Panc1 (cell line): ENCODE measurements at regions of chr2 and their contacts with region 1.

Region 1: GRCh38 chr2:151063271-151063670 is 198.4 kb downstream of the RBM43 start:
- DNase-seq: no peak
- ATAC-seq: no peak
- H3K4me3 ChIP-seq: no peak overlapping the region
- H3K27ac ChIP-seq: no peak overlapping the region
- H3K4me1 ChIP-seq: no peaks in the 10 kb centered on the region
- H3K27me3 ChIP-seq: no peaks in the 10 kb centered on the region
- CTCF ChIP-seq: no peak

Region 2: DNA sequence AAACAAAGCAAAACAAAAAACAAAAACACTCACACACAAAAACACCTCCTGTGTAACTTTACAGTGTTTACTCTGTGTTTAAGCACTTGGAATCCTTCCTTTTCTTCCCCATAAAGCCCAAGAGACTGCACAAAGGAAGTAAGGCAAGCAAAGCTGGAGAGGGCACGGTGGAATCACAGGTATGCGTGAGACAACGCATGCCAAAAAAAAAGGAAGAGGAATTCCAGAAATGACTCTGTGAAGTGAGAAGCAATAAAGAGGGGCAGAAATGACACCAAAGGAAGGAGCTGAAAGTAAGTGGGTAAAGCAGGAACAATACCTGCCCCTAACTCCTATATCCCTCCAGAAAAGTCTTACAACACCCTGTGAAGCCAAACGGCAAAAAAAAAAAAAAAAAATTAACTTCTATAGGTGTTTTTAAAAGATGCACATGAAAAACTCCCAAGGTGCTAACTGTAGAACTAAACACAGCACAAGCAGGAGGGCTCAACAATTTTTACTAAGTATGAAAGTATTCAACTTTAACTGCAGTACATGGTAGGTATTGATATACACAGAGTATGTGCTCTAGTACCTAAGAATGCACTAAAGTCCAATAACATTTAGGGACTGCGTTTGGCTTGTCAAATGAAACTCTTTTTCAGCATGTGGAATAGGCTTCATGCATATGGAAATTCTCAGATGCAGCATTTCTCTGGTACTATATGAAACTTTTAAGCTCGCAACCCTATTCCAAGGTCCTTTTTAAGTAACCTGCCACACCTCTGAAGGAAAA is 584.9 kb before region 1 on chr2:
- CTCF ChIA-PET with region 1: no interaction called
- POLR2A ChIA-PET with region 1: interaction called, 11 read pairs
- in situ Hi-C with region 1: no loop called
- intact Hi-C with region 1: loop called (anchors 10 kb)
- DNase-seq: no peak
- ATAC-seq: peak; percentile 47; the same call in 1 of the 2 replicates
- H3K4me3 ChIP-seq: peak overlapping the region in 1 of 2 experiments; percentile 19; a peak in 1 of 4 replicates
- H3K27ac ChIP-seq: peak overlapping the region; percentile 77
- H3K4me1 ChIP-seq: peaks cover 87% of the 10 kb centered on the region
- H3K27me3 ChIP-seq: no peaks in the 10 kb centered on the region
- CTCF ChIP-seq: no peak